ENCODE measurements at regions of chr4 and their contacts with region 1.

Region 1: GRCh38 chr4:128574706-128575105 is 234.8 kb upstream of the JADE1 start:
- DNase-seq: peak; percentile 71 to 91
- H3K4me3 ChIP-seq: no peak overlapping the region
- H3K4me1 ChIP-seq: peaks cover 6% of the 10 kb centered on the region
- H3K27me3 ChIP-seq: no peaks in the 10 kb centered on the region

Region 2: DNA sequence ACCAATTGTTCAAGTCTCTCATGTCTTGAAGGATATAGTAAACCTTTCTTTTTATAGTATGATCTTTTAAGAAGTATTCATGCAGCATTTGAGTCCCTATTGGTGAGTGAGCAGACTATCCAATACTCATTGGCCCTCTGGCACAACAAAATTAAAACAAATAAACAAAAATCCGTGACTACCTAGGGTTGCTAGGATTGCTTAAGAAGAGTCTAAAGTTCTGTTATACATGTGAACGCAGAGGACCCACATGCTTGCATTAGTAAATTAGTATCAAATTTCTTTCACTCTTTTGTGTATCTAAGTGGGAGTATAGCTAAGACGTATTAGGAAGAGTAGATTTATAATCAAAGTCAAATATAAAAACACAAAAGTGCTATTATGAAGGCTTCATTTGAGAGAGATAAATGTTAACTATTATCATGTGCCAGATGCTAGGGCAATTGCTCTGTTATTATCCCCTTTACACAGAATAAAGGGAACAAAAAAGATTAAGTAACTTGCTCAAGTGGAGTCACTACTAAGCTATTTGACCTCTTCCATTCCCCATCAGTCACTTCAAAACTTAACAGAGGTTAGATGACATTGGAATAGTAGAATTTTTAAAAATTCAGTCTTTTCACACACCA is 542.8 kb before region 1 on chr4:
- in situ Hi-C with region 1: no loop called
- DNase-seq: peak in 1 of 2 experiments; percentile 84
- H3K4me3 ChIP-seq: no peak overlapping the region
- H3K4me1 ChIP-seq: peaks cover 5% of the 10 kb centered on the region
- H3K27me3 ChIP-seq: no peaks in the 10 kb centered on the region

Region 3: DNA sequence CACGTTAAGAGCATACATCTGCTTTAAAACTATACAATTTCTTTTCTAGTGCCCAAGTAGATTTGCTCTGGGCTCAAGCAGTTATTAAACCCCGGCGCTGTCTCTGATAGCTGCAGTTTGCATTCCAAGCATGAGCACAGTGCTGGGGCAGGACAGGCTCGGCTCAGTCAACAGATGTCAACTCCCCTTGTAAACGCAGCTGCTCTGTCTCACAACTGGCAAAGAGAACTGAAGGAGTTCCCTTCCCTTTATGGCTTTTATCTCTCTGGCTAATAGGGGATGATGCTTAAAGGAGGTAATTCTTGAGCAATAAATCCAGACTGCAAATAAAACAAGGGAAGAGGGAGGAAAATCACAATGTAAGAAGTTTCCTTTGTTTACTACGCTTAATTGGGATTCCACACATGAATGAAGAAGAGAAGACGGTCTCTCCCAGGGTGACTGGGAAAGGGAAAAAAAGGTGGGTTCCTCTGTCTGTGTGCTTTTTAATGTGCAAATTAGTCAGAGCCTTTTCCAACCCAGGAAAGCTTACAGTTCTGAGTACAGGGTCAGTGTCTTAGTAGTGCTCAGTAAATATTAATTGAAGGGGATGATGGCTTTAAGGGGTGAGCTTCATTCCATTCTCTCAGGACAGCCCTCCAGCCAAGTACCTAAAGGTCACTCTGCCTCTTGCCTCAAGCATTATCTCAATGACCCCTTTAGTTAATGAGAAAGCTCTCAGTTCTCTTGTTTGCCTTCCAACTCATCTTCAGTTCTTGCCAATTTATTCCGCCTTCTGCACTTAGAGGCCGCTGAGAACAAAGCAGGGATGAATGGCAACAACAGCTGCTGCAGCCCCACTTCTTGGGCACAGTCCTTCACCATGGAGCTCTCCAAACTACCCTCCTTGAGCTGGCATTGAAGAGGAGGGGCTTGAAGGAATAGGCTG is 79.1 kb after region 1 on chr4:
- in situ Hi-C with region 1: no loop called
- DNase-seq: peak in 1 of 2 experiments; percentile 18
- H3K4me3 ChIP-seq: no peak overlapping the region
- H3K4me1 ChIP-seq: peaks cover 5% of the 10 kb centered on the region; the same call in 1 of the 2 replicates
- H3K27me3 ChIP-seq: no peaks in the 10 kb centered on the region

Region 4: DNA sequence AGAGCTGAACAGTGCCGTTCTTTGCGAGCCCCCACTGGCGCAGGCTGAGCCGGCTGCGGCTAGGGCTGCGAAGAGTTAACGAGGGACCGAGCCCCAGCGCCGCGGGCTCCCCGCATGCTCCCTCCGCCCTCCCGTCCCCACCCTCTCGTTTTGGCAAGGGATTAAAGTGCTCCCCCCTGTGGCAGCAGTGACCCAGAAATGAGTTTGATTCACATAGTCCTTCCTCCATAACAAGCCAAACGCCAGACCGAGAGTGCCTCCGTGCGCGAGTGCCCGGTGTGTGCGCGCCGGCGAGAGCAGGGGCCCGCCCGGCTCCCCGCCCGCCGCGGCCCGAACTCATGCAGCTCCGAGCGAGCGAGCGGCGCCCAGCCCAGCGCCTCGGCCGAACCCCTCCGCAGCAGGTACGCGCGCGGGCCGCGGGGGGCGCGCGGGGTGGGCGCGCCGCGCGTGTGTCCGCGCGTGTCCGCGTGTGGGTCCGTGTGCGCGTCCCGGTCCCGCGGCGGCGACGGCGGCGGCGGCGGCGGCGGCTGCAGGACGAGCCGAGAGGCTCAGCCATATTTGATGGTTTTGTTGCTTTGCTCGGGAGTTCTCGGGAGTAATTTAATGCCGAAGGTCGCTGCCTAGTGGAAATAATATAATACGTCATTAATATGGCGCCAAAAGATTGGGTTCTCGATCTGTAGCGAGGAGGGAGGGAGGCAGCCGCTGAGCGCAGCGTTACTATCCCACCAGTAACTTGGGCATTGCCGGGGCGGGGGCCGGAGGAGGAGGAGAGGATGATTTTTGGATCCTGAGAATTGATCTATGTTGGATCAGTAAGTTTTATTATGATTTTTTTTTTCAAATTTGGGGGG is 235.0 kb after region 1 on chr4 and contains the start of gene JADE1:
- in situ Hi-C with region 1: loop called (anchors 25 kb)
- DNase-seq: peak; percentile 91 to 95
- H3K4me3 ChIP-seq: peak within 1 kb of the TSS; percentile 79
- H3K4me1 ChIP-seq: peaks cover 8% of the 10 kb centered on the region
- H3K27me3 ChIP-seq: no peaks in the 10 kb centered on the region

Region 5: GRCh38 chr4:128908735-128909134 is 334.0 kb after region 1 on chr4:
- in situ Hi-C with region 1: no loop called
- DNase-seq: no peak
- H3K4me3 ChIP-seq: no peak overlapping the region
- H3K4me1 ChIP-seq: no peaks in the 10 kb centered on the region
- H3K27me3 ChIP-seq: no peaks in the 10 kb centered on the region